Body of pancreas (tissue), 4 donors: ENCODE measurements at regions of chr1 and their contacts with region 1.

Region 1: GRCh38 chr1:77533660-77534305 is 148.7 kb downstream of the ZZZ3 start:
- DNase-seq: peak; percentile 50 to 67 (median 57)
- ATAC-seq: peak; percentile 74
- H3K4me3 ChIP-seq: no peak overlapping the region
- H3K27ac ChIP-seq: no peak overlapping the region
- H3K4me1 ChIP-seq: peaks cover 10% of the 10 kb centered on the region
- H3K27me3 ChIP-seq: no peaks in the 10 kb centered on the region
- CTCF ChIP-seq: peak; percentile 69 to 83 (median 72)
- POLR2A ChIP-seq: no peak

Region 2: DNA sequence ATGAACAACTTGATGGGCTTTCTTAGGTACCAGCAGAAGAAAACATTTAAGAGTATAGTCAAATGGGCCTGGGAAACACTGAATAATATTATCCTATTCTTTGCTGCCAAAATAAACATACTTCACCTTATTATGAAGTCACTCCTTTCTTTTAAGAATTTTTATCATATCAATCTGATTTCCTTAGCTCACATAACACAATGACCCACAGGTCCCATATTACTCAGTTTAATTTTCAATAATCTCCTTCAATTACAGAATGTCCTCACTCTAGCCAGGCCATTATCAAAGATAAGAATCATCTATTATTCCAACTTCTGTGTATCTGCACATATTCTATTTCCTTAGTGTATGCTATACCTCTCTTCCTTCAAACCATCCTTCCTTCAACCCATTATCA is 377.6 kb before region 1 on chr1:
- intact Hi-C with region 1: loop called (anchors 10 kb)
- DNase-seq: no peak
- ATAC-seq: no peak
- H3K4me3 ChIP-seq: no peak overlapping the region
- H3K27ac ChIP-seq: no peak overlapping the region
- H3K4me1 ChIP-seq: no peaks in the 10 kb centered on the region
- H3K27me3 ChIP-seq: no peaks in the 10 kb centered on the region
- CTCF ChIP-seq: no peak
- POLR2A ChIP-seq: no peak